Naive thymus-derived CD4-positive, alpha-beta T cell (primary cell): ENCODE measurements at regions of chr1 and their contacts with region 1.

Region 1: GRCh38 chr1:203795441-203796235 is at the starts of genes ZBED6 and ZC3H11A:
- DNase-seq: peak; percentile 85 to 100 (median 97)
- ATAC-seq: peak; percentile 99
- H3K4me3 ChIP-seq: peak within 1 kb of the TSS; percentile 80
- H3K4me3 Mint-ChIP-seq: peak within 1 kb of the TSS; percentile 94 to 98 (median 96)
- H3K27ac ChIP-seq: peak within 1 kb of the TSS; percentile 80
- H3K27ac Mint-ChIP-seq: peak within 1 kb of the TSS; percentile 82 to 98 (median 96)
- H3K4me1 ChIP-seq: peaks cover 35 to 36% of the 10 kb centered on the region in 2 donors
- H3K4me1 Mint-ChIP-seq: peaks cover 18 to 55% (median 48%) of the 10 kb centered on the region in 7 donors
- H3K27me3 ChIP-seq: no peaks in the 10 kb centered on the region
- H3K27me3 Mint-ChIP-seq: no peaks in the 10 kb centered on the region
- total RNA-seq, gene ZBED6: 23.8 to 36.1 (median 31.9) TPM
- total RNA-seq, gene ZC3H11A: 70.9 to 138 (median 91.6) TPM

Region 2: DNA sequence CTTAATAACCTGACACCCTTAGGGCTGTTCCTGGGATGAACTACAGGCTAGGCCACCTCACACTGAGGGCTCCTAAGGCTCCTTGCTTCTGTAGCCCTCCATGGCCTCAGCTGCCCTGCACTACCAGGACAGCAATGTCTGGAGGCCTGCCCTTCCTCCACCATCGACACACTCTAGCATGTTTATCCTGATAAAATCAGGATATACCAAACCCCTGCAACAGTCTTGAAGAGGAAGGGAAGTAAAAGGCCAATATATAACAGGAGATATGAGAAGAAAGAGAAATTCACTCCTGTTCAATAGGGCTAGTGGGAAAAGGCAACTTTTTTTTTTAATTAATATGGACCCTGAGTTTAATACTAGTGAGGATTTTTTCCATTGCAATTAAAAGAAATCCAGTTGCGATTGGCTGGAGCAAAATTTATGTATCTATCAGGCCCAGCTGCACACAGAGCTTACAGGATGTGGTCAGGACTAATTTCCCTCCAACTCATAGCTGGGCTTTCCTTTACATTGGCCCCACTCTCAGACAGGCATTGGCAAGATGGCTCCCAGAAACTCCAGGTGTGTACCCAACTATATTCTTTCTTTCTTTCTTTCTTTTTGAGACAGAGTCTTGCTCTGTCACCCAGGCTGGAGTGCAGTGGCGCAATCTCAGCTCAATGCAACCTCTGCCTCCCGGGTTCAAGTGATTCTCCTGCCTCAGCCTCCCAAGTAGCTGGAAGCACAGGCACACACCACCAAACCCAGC is 182.5 kb before region 1 on chr1:
- CTCF ChIA-PET with region 1: no interaction called
- POLR2A ChIA-PET with region 1: no interaction called
- intact Hi-C with region 1: no loop called
- DNase-seq: no peak
- ATAC-seq: no peak
- H3K4me3 ChIP-seq: no peak overlapping the region
- H3K4me3 Mint-ChIP-seq: peak overlapping the region in 1 of 10 donors; percentile 49
- H3K27ac ChIP-seq: no peak overlapping the region
- H3K27ac Mint-ChIP-seq: peak overlapping the region in 2 of 9 donors; percentile 58 to 76
- H3K4me1 ChIP-seq: peaks cover 0 to 6% of the 10 kb centered on the region in 2 donors
- H3K4me1 Mint-ChIP-seq: peaks cover 12 to 68% (median 18%) of the 10 kb centered on the region in 7 donors
- H3K27me3 ChIP-seq: no peaks in the 10 kb centered on the region
- H3K27me3 Mint-ChIP-seq: no peaks in the 10 kb centered on the region

Region 3: GRCh38 chr1:203682473-203683383 is 112.9 kb before region 1 on chr1:
- CTCF ChIA-PET with region 1: no interaction called
- POLR2A ChIA-PET with region 1: no interaction called
- intact Hi-C with region 1: loop called in 1 of 2 experiments (anchors 1 kb)
- DNase-seq: peak; percentile 26 to 89 (median 80)
- ATAC-seq: peak; percentile 97
- H3K4me3 ChIP-seq: no peak overlapping the region
- H3K4me3 Mint-ChIP-seq: peak overlapping the region; percentile 19 to 72 (median 54)
- H3K27ac ChIP-seq: peak overlapping the region; percentile 67
- H3K27ac Mint-ChIP-seq: peak overlapping the region; percentile 82 to 96 (median 95)
- H3K4me1 ChIP-seq: peaks cover 24 to 26% of the 10 kb centered on the region in 2 donors
- H3K4me1 Mint-ChIP-seq: peaks cover 32 to 57% (median 51%) of the 10 kb centered on the region in 7 donors
- H3K27me3 ChIP-seq: no peaks in the 10 kb centered on the region
- H3K27me3 Mint-ChIP-seq: no peaks in the 10 kb centered on the region

Region 4: GRCh38 chr1:203744075-203744972 is 51.3 kb before region 1 on chr1:
- CTCF ChIA-PET with region 1: no interaction called
- POLR2A ChIA-PET with region 1: interaction called, 4 read pairs
- intact Hi-C with region 1: loop called in 1 of 2 experiments (anchors 1 kb)
- DNase-seq: peak in 7 of 9 donors; percentile 20 to 59 (median 51)
- ATAC-seq: peak; percentile 85
- H3K4me3 ChIP-seq: no peak overlapping the region
- H3K4me3 Mint-ChIP-seq: peak overlapping the region; percentile 49 to 90 (median 76)
- H3K27ac ChIP-seq: peak overlapping the region; percentile 65
- H3K27ac Mint-ChIP-seq: peak overlapping the region; percentile 87 to 96 (median 93)
- H3K4me1 ChIP-seq: peaks cover 0 to 15% of the 10 kb centered on the region in 2 donors
- H3K4me1 Mint-ChIP-seq: peaks cover 12 to 31% (median 26%) of the 10 kb centered on the region in 7 donors
- H3K27me3 ChIP-seq: no peaks in the 10 kb centered on the region
- H3K27me3 Mint-ChIP-seq: no peaks in the 10 kb centered on the region

Region 5: DNA sequence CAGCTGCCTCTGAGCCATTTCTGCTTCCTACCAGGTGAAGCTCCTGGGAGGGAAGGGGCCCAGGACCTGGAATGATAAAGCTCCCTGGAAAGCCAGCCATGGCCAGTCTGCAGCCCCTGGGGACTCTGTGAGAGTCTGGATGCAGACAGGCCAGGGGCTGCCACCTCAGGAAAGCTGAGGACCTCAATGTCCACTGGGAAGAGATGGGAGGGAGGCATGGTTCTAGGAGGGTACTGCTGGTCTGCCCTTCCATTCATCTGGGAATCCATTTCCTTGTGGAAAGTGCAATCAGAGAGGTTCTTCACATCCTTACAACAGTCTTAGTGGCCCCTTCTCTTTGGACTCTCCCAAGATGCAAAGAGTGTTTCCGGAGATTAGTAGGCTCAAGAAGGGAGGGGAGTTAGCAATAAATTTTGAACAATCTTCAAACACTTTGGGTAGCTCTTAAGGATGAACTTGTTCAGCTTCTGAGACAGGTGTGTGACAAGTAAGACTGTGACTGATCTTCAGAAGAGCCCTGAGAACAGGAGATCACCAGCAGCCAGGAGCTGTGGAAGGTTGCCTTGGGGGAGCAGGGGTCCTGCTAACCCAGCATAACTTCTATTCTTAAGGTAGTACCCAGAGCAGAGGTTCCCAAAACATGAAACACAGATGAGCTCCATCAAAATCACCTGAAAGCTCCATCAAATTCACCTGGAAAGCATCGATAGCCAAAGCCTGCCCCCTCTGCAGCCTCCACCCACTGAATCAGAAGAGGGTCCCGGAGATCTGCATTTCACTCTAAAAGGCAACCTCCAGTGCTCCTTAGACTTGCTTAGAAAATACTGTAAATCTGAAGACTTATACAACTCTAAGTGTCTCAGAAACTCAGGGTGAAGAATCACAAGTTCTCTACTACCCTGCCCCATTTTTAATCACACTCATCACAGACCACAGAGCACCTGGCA is 31.3 kb before region 1 on chr1:
- CTCF ChIA-PET with region 1: interaction called, 4 read pairs
- POLR2A ChIA-PET with region 1: interaction called, 12 read pairs
- intact Hi-C with region 1: loop called (anchors 1 kb)
- DNase-seq: peak in 1 of 9 donors; percentile 11
- ATAC-seq: no peak
- H3K4me3 ChIP-seq: peak overlapping the region; percentile 72
- H3K4me3 Mint-ChIP-seq: peak overlapping the region; percentile 90 to 99 (median 97)
- H3K27ac ChIP-seq: peak overlapping the region; percentile 88
- H3K27ac Mint-ChIP-seq: peak overlapping the region; percentile 97 to 99 (median 98)
- H3K4me1 ChIP-seq: peaks cover 44 to 45% of the 10 kb centered on the region in 2 donors
- H3K4me1 Mint-ChIP-seq: peaks cover 38 to 80% (median 52%) of the 10 kb centered on the region in 7 donors
- H3K27me3 ChIP-seq: no peaks in the 10 kb centered on the region
- H3K27me3 Mint-ChIP-seq: no peaks in the 10 kb centered on the region

Region 6: DNA sequence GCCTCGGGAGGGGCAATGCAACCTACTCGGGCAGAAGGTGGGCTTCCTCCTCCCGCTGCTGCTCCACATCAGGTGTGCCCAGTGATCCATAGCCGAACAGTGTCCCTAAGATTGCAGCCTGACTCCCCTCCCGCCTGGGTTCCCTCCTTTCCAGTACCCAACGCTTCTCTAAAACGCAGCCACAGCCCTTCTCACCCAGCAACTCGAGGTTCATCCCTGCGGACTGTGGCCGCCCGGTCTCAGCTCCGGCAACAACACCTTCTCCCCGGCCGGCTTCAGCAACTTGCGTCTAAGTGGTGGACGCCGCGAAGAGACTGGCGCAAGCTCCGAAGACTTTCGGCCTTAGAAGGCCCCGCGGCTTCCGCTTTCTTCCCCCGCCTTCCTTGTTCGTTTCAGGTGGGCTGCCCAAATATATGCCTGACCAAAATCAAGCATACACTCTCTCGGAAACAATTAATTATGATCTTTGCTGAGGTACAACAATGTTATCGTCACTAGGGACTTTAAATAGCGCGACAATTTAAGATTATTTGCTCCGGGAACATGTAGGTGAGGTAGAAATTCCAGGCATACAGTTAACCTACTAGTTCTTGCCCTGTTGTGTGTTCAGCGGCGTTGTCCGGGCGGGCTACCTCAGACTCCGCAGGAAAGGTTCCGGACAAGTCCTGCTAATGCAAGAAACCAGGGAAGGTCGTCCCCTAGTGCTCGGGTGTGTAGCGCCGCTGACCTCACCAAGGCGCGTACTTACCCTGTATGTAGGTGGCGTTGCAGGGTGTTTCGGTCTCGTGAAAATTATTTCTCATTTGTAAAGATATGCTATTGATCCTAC is 1326.2 kb after region 1 on chr1 and contains the start of gene RBBP5:
- CTCF ChIA-PET with region 1: no interaction called
- POLR2A ChIA-PET with region 1: no interaction called
- intact Hi-C with region 1: loop called (anchors 1 to 2 kb)
- DNase-seq: peak; percentile 87 to 97 (median 93)
- ATAC-seq: peak; percentile 98
- H3K4me3 ChIP-seq: peak within 1 kb of the TSS; percentile 89
- H3K4me3 Mint-ChIP-seq: peak within 1 kb of the TSS; percentile 89 to 99 (median 96)
- H3K27ac ChIP-seq: peak within 1 kb of the TSS; percentile 86
- H3K27ac Mint-ChIP-seq: peak within 1 kb of the TSS; percentile 98 to 100 (median 99)
- H3K4me1 ChIP-seq: peaks cover 18 to 24% of the 10 kb centered on the region in 2 donors
- H3K4me1 Mint-ChIP-seq: peaks cover 30 to 56% (median 51%) of the 10 kb centered on the region in 7 donors
- H3K27me3 ChIP-seq: no peaks in the 10 kb centered on the region
- H3K27me3 Mint-ChIP-seq: no peaks in the 10 kb centered on the region
- total RNA-seq, gene RBBP5: 11.0 to 31.5 (median 21.0) TPM